Activated CD4-positive, alpha-beta T cell treated with anti-CD3 and anti-CD28 coated beads, Interleukin-2, amount 10 ng/mL, durations not matched to agents 24 days and 14 days (primary cell): ENCODE measurements at regions of chr17 and their contacts with region 1.

Region 1: DNA sequence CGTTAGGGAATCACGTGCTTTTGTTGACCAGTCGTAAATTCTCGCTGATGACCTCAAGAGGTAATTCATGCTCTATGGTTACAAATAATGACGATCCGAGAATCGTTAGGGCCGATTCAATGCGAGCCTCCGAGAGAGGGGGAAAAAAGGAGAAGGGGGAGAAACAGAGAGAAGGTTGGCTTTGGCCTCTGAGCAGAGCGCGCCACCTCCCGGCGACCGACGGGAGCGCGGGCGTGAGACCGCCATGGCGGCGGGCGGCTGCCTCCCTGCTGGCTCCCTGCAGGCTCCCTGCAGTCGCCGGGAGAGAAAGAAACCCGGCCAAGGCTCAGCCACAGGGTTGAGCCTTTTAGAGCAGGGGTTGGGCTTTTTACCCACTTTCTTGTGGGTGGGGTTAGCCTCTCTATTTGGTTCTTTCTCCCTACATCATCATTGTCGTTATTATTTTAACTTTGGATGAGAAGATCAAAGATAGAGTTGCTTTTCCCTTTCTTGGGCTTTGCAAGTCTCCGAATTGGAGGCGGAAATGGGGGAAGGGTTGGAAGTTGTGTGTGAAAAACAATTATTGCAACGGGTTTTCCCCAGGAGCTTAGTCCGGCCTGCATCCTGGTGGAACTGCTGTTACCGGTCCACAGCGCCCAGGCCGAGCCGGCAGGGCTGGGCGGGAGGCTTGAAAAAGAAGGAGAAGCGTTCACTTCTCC is 410 bp upstream of the HOXB5 start:
- DNase-seq: peak; percentile 96
- H3K4me3 Mint-ChIP-seq: peak overlapping the region; percentile 85
- H3K27ac Mint-ChIP-seq: no peak overlapping the region
- H3K4me1 Mint-ChIP-seq: peaks cover 45% of the 10 kb centered on the region
- H3K27me3 Mint-ChIP-seq: peaks cover 87% of the 10 kb centered on the region

Region 2: DNA sequence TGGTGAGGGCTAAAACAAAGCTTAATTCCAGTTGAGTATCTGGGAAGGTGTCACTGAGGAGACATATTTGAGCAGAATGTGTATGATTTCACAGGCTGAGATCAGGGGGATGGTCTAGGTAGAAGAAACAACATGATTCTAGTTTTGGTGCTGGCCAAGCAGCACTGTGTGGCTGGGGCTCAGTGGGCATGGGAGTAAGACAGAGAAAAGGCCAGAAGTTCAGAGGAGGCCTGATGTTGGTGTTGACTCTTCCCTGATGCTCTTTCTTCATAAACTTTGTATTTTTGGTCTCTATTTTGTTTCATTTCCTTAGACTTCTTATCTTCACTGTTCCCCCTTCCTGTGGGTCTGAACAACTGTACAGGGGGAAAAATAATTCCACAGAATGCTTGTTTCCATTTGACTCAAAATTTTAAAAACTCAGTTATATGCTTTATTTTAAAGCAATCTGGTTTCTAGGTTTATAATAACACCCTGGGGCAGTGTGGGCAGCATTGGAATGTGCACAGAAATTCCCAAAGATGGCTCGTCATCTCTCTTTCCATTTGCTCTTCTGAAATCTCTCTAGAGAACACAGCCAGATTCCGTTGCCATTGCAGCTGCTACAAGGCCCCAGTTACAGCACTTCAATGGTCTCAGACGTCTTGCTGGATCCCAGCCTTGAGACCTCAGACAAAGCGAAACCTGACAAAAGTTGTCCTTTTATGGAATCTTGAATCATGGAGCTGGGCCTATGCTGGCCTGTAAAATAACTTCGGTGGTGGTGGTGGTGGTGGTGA is 418.1 kb before region 1 on chr17:
- intact Hi-C with region 1: loop called (anchors 10 kb)
- DNase-seq: no peak
- H3K4me3 Mint-ChIP-seq: no peak overlapping the region
- H3K27ac Mint-ChIP-seq: no peak overlapping the region
- H3K4me1 Mint-ChIP-seq: peaks cover 18% of the 10 kb centered on the region
- H3K27me3 Mint-ChIP-seq: no peaks in the 10 kb centered on the region

Region 3: GRCh38 chr17:48335858-48336500 is 258.0 kb before region 1 on chr17:
- intact Hi-C with region 1: loop called (anchors 1 kb)
- DNase-seq: peak; percentile 72
- H3K4me3 Mint-ChIP-seq: no peak overlapping the region
- H3K27ac Mint-ChIP-seq: no peak overlapping the region
- H3K4me1 Mint-ChIP-seq: peaks cover 12% of the 10 kb centered on the region
- H3K27me3 Mint-ChIP-seq: no peaks in the 10 kb centered on the region

Region 4: DNA sequence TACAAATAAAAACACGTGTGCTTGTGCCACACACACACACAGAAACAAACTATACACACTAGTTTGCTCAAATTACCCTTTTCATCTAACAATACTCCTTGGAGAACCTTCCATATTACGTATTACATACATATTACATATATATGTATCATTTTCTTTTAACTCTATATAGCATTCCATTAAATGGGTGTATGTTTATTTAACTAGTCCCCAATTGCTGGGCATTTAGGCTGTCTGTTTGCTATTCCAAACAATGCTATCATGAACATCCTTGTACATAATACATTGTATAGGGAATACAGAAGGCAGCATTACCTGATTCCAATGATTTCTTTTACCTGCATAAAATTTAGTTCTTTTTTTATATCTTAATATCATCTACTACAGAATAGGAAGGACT is 237.1 kb before region 1 on chr17:
- intact Hi-C with region 1: no loop called
- DNase-seq: no peak
- H3K4me3 Mint-ChIP-seq: no peak overlapping the region
- H3K27ac Mint-ChIP-seq: no peak overlapping the region
- H3K4me1 Mint-ChIP-seq: peaks cover 5% of the 10 kb centered on the region
- H3K27me3 Mint-ChIP-seq: no peaks in the 10 kb centered on the region

Region 5: GRCh38 chr17:48492401-48493298 is 101.3 kb before region 1 on chr17:
- intact Hi-C with region 1: loop called (anchors 2 kb)
- DNase-seq: peak; percentile 92
- H3K4me3 Mint-ChIP-seq: peak overlapping the region; percentile 69
- H3K27ac Mint-ChIP-seq: peak overlapping the region; percentile 88
- H3K4me1 Mint-ChIP-seq: peaks cover 36% of the 10 kb centered on the region
- H3K27me3 Mint-ChIP-seq: peaks cover 22% of the 10 kb centered on the region

Region 6: DNA sequence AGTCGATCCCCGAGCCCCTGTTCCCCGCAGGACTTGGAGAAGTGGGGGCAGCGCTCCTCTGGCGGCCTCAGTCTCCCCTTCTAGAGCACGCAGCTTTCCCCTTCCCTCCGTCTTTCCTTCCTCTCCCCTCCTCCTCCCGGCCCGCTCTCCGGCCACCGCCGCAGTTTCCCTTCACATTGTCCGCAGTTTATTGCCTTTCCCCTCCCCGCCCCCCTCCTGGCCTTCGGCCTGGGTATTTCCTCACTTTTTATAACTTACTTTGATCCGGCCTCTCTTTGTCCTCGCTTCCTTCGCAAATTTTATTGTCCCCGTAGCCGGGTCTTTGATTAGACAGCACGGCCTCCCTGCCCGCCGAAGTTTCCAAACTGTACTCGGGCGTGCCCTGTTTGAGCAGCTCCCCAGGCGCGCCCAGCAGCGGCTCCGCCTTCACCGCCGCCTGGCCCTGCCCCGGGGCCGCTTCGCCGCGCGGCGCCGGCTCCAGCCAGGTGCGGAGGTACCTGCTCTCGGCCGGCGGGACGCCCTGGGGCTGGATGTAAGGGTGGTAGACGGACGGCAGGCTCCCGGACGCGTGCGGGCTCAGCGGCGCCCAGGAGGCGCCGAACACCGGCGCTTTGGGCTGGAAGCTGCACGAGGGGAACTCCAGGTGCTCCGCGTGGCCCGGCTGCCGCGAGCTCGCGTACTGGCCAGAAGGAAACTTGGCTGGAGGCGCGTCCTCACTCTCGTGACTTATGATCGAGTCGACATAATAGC is 31.7 kb after region 1 on chr17:
- intact Hi-C with region 1: loop called (anchors 5 kb)
- DNase-seq: peak; percentile 81
- H3K4me3 Mint-ChIP-seq: peak overlapping the region; percentile 85
- H3K27ac Mint-ChIP-seq: peak overlapping the region; percentile 64
- H3K4me1 Mint-ChIP-seq: peaks cover 10% of the 10 kb centered on the region
- H3K27me3 Mint-ChIP-seq: peaks cover 82% of the 10 kb centered on the region